ENCODE measurements at regions of chr6 and their contacts with region 1.

Region 1: DNA sequence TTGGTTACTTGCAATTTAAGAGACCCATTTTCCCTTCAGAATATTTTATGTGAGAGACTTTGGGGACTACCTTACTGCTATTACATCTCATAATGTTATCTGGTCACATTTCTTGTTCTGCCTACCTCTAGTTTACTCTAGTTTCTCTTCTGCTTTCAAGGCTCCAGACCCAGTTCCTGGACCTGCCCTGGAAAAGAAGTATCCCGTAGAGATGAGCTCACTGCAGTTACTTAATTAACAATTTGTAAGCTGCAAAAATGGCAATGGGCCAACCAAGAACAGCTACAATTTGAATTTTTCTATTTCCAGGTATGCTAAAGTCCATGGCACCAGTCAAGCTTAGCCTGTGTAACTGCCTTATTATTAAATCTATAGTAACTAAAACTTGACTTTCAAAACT is 25.0 kb downstream of the TAB2 start:
- DNase-seq: no peak
- ATAC-seq: no peak
- H3K4me3 ChIP-seq: no peak overlapping the region
- H3K4me3 Mint-ChIP-seq: no peak overlapping the region
- H3K27ac ChIP-seq: no peak overlapping the region
- H3K27ac Mint-ChIP-seq: peak overlapping the region; percentile 63
- H3K4me1 ChIP-seq: peaks cover 38% of the 10 kb centered on the region
- H3K4me1 Mint-ChIP-seq: peaks cover 82% of the 10 kb centered on the region
- H3K27me3 ChIP-seq: no peaks in the 10 kb centered on the region
- H3K27me3 Mint-ChIP-seq: no peaks in the 10 kb centered on the region
- CTCF ChIP-seq: no peak

Region 2: GRCh38 chr6:149329529-149329928 is 13.0 kb before region 1 on chr6:
- CTCF ChIA-PET with region 1: interaction called, 4 read pairs
- POLR2A ChIA-PET with region 1: interaction called, 4 read pairs
- intact Hi-C with region 1: loop called in 1 of 2 experiments (anchors 2 kb)
- DNase-seq: no peak
- ATAC-seq: no peak
- H3K4me3 ChIP-seq: no peak overlapping the region
- H3K4me3 Mint-ChIP-seq: no peak overlapping the region
- H3K27ac ChIP-seq: no peak overlapping the region
- H3K27ac Mint-ChIP-seq: no peak overlapping the region
- H3K4me1 ChIP-seq: peaks cover 82% of the 10 kb centered on the region
- H3K4me1 Mint-ChIP-seq: peaks cover 84% of the 10 kb centered on the region
- H3K27me3 ChIP-seq: no peaks in the 10 kb centered on the region
- H3K27me3 Mint-ChIP-seq: no peaks in the 10 kb centered on the region
- CTCF ChIP-seq: no peak

Region 3: DNA sequence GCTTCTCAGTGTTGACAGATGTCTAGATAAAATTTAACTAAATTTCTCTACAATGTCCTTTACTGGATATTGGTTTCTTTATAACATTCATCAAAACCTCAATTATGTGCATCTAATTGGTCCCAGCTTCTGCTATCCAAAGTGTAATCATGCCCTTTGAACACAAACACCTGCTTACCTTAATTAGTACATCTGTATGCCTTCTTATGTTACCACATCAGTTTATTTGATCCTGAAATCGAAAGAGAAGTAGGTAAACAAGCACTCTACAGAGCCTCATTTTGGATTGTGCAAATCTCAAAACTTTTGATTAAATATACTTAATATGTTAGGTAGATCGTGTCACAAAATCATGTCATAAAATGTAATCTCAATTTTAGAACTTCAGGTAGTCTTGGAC is 11.5 kb after region 1 on chr6:
- CTCF ChIA-PET with region 1: no interaction called
- POLR2A ChIA-PET with region 1: interaction called, 3 read pairs
- intact Hi-C with region 1: loop called in 1 of 2 experiments (anchors 2 kb)
- DNase-seq: no peak
- ATAC-seq: peak; percentile 34
- H3K4me3 ChIP-seq: no peak overlapping the region
- H3K4me3 Mint-ChIP-seq: no peak overlapping the region
- H3K27ac ChIP-seq: no peak overlapping the region
- H3K27ac Mint-ChIP-seq: no peak overlapping the region
- H3K4me1 ChIP-seq: peaks cover 34% of the 10 kb centered on the region
- H3K4me1 Mint-ChIP-seq: peaks cover 72% of the 10 kb centered on the region
- H3K27me3 ChIP-seq: no peaks in the 10 kb centered on the region
- H3K27me3 Mint-ChIP-seq: no peaks in the 10 kb centered on the region
- CTCF ChIP-seq: no peak

Region 4: GRCh38 chr6:149513915-149514314 is 171.4 kb after region 1 on chr6:
- CTCF ChIA-PET with region 1: no interaction called
- POLR2A ChIA-PET with region 1: no interaction called
- intact Hi-C with region 1: no loop called
- DNase-seq: no peak
- ATAC-seq: no peak
- H3K4me3 ChIP-seq: no peak overlapping the region
- H3K4me3 Mint-ChIP-seq: no peak overlapping the region
- H3K27ac ChIP-seq: no peak overlapping the region
- H3K27ac Mint-ChIP-seq: no peak overlapping the region
- H3K4me1 ChIP-seq: peaks cover 13% of the 10 kb centered on the region
- H3K4me1 Mint-ChIP-seq: peaks cover 29% of the 10 kb centered on the region
- H3K27me3 ChIP-seq: no peaks in the 10 kb centered on the region
- H3K27me3 Mint-ChIP-seq: no peaks in the 10 kb centered on the region
- CTCF ChIP-seq: no peak